IMR-90 (cell line): ENCODE measurements at regions of chr2 and their contacts with region 1.

Region 1: GRCh38 chr2:222976521-222977076 is 75.4 kb upstream of the KCNE4 start:
- DNase-seq: no peak
- ATAC-seq: no peak
- H3K4me3 ChIP-seq: no peak overlapping the region
- H3K27ac ChIP-seq: no peak overlapping the region
- H3K4me1 ChIP-seq: peaks cover 3% of the 10 kb centered on the region; the same call in 1 of the 2 replicates
- H3K27me3 ChIP-seq: no peaks in the 10 kb centered on the region
- CTCF ChIP-seq: no peak
- POLR2A ChIP-seq: no peak
- RAD21 ChIP-seq: no peak

Region 2: GRCh38 chr2:222944552-222944951 is 32.0 kb before region 1 on chr2:
- CTCF ChIA-PET with region 1: no interaction called
- POLR2A ChIA-PET with region 1: no interaction called
- dilution Hi-C with region 1: no loop called
- in situ Hi-C with region 1: no loop called
- intact Hi-C with region 1: no loop called
- DNase-seq: peak; percentile 26
- ATAC-seq: no peak
- H3K4me3 ChIP-seq: no peak overlapping the region
- H3K27ac ChIP-seq: peak overlapping the region; percentile 84; the same call in 1 of the 2 replicates
- H3K4me1 ChIP-seq: peaks cover 13% of the 10 kb centered on the region
- H3K27me3 ChIP-seq: no peaks in the 10 kb centered on the region
- CTCF ChIP-seq: no peak
- POLR2A ChIP-seq: no peak
- RAD21 ChIP-seq: no peak

Region 3: DNA sequence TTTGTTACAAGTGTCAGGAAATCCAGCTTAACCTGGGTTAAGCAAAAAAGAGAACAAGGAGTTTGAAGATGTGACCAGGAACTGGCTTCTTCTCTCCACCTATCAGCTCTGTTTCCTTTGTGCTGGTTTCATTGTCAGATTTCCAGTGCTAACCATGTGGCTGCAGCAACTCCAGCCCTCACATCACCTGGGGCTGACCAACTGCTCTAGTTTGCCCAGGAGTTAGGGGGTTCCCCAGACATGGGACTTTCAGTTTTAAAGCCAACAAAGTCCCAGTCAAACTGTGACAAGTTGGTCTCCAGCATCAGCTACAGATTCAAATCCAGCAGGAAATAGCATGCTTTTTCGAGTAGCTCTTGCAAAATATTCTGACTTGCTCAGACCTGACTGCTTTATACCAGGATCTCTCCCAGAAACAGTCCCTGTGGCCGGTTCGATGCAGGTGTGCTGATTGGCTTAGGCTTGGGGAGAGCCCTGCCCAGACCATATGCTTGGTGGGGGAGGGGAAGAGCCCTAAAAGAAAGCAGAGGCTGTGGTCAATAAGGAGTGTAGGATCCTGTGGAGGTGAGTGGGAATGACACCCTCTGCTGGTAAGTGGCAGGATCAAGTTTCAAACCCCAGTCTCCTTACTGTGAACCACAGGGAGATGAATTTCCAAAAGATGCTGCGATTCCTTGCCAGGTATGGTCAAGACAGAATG is 124.9 kb after region 1 on chr2:
- CTCF ChIA-PET with region 1: interaction called, 18 read pairs
- POLR2A ChIA-PET with region 1: no interaction called
- dilution Hi-C with region 1: no loop called
- in situ Hi-C with region 1: no loop called
- intact Hi-C with region 1: no loop called
- DNase-seq: peak; percentile 55
- ATAC-seq: peak; percentile 71
- H3K4me3 ChIP-seq: no peak overlapping the region
- H3K27ac ChIP-seq: no peak overlapping the region
- H3K4me1 ChIP-seq: peaks cover 4% of the 10 kb centered on the region
- H3K27me3 ChIP-seq: no peaks in the 10 kb centered on the region
- CTCF ChIP-seq: peak; percentile 58
- POLR2A ChIP-seq: no peak
- RAD21 ChIP-seq: peak; percentile 70

Region 4: DNA sequence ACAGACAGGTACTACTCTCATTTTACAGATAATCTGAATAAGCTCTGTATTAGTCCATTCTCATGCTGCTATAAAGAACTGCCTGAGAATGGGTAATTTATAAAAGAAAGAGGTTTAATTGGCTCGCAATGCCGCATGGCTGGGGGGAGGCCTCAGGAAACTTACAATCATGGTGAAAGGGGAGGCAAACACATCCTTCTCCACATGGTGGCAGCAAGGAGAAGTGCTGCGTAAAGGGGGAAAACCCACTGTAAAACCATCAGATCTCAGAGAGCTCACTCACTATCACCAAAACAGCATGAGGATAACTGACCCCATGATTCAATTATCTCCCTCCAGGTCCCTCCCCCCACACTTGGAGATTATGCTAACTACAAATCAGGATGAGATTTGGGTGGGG is 329.8 kb after region 1 on chr2:
- CTCF ChIA-PET with region 1: interaction called, 3 read pairs
- POLR2A ChIA-PET with region 1: no interaction called
- dilution Hi-C with region 1: no loop called
- in situ Hi-C with region 1: no loop called
- intact Hi-C with region 1: loop called (anchors 1 kb)
- DNase-seq: peak; percentile 49
- ATAC-seq: peak; percentile 64; the same call in 1 of the 2 replicates
- H3K4me3 ChIP-seq: no peak overlapping the region
- H3K27ac ChIP-seq: no peak overlapping the region
- H3K4me1 ChIP-seq: no peaks in the 10 kb centered on the region
- H3K27me3 ChIP-seq: no peaks in the 10 kb centered on the region; the same call in 1 of the 2 replicates
- CTCF ChIP-seq: peak; percentile 47
- POLR2A ChIP-seq: no peak
- RAD21 ChIP-seq: peak; percentile 56